Panc1 (cell line): ENCODE measurements at regions of chr5 and their contacts with region 1.

Region 1: GRCh38 chr5:75336625-75337339 is at the start of gene HMGCR:
- DNase-seq: peak; percentile 97
- ATAC-seq: peak; percentile 99
- H3K4me3 ChIP-seq: peak within 1 kb of the TSS; percentile 70 to 97
- H3K27ac ChIP-seq: peak within 1 kb of the TSS; percentile 85
- H3K4me1 ChIP-seq: peaks cover 26% of the 10 kb centered on the region
- H3K27me3 ChIP-seq: no peaks in the 10 kb centered on the region
- CTCF ChIP-seq: peak; percentile 51
- total RNA-seq, gene HMGCR: 113 TPM

Region 2: GRCh38 chr5:75236322-75237316 is 100.2 kb before region 1 on chr5 and contains the start of gene ANKRD31:
- CTCF ChIA-PET with region 1: interaction called, 20 read pairs
- POLR2A ChIA-PET with region 1: interaction called, 6 read pairs
- in situ Hi-C with region 1: no loop called
- intact Hi-C with region 1: no loop called
- DNase-seq: peak; percentile 20
- ATAC-seq: peak; percentile 99
- H3K4me3 ChIP-seq: peak within 1 kb of the TSS; percentile 76 to 83
- H3K27ac ChIP-seq: peak within 1 kb of the TSS; percentile 83
- H3K4me1 ChIP-seq: peaks cover 8% of the 10 kb centered on the region
- H3K27me3 ChIP-seq: no peaks in the 10 kb centered on the region
- CTCF ChIP-seq: peak; percentile 97
- total RNA-seq, gene ANKRD31: not detected

Region 3: DNA sequence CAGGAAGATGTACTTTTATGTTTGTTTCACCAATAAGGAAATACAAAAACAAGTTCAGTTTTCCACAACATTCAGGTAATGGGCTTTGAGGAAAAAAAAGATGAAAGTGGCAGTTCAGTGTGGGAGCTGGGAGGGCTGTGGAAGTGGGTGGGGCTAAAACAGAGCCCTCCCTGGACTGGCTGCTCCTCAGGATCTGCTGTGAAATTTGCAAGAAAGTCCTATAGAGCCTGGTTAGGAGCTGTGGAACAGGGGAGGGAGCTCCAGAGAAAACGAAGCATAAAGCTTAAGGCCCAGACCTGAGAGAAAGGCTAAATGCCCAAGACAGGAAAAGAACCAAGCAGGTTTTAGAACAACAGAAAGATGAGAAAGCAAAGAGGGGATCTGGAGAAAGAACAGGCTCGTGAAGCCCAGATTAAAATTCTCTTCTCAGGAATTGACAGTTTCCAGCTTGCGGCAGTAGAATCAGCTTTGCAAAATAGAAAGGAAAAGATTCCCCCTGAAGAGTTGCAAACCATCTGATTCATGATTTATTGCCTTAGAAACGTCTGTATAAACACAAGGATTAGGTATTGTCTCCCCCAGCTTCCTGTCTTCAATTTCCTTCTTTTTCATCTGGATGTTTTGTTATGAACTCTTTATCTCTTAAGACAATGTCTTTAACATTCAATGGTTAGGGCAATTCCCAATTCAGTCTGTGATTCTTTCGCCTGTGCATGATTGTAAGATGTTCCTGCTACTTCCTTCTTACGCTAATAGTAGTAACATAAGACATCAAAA is 1589.7 kb after region 1 on chr5:
- CTCF ChIA-PET with region 1: no interaction called
- POLR2A ChIA-PET with region 1: interaction called, 10 read pairs
- in situ Hi-C with region 1: no loop called
- intact Hi-C with region 1: no loop called
- DNase-seq: no peak
- ATAC-seq: no peak
- H3K4me3 ChIP-seq: no peak overlapping the region
- H3K27ac ChIP-seq: no peak overlapping the region
- H3K4me1 ChIP-seq: no peaks in the 10 kb centered on the region
- H3K27me3 ChIP-seq: peaks cover 2% of the 10 kb centered on the region; the same call in 1 of the 2 replicates
- CTCF ChIP-seq: no peak